GM18951 (cell line): ENCODE measurements at regions of chr4 and their contacts with region 1.

Region 1: GRCh38 chr4:70601422-70602039 is 9.5 kb downstream of the AMBN start:
- POLR2A ChIP-seq: no peak

Region 2: DNA sequence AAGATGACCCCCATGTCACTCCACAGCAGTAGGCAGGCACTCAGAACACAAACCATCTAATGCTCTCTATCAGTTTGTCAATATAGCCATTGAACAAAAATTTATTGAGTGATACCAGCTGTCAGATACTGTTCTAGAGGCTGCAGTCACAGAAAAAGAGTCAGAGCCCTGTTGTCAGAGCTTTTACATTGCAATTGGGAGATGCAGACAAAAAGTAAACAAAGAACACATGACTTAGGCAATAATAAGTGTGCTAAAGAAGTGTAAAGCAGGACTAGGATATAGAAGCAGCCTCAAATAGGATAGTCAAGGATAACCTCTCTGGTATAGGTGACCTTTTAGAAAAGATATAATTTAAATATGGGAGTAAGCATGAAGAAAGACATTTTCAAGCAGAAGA is 542.4 kb before region 1 on chr4:
- in situ Hi-C with region 1: no loop called
- POLR2A ChIP-seq: no peak

Region 3: DNA sequence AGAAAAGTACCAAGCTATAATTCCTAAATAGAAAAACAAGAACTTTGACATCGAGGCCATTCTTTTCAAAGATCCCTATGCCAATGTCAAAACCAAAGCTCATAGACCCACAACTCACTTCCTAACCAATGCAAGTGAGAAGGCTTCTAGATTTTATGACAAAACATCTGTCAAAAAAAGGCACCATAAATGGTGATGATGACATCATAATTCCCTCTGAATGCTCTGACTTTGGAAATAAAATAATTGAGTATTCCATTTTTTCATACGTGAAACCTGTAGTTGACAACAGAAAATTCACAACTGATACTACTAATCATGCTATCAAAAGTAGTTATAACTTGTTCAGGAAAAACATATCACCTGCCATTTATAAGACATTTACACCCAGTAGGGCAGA is 275.5 kb before region 1 on chr4:
- in situ Hi-C with region 1: no loop called
- POLR2A ChIP-seq: no peak

Region 4: DNA sequence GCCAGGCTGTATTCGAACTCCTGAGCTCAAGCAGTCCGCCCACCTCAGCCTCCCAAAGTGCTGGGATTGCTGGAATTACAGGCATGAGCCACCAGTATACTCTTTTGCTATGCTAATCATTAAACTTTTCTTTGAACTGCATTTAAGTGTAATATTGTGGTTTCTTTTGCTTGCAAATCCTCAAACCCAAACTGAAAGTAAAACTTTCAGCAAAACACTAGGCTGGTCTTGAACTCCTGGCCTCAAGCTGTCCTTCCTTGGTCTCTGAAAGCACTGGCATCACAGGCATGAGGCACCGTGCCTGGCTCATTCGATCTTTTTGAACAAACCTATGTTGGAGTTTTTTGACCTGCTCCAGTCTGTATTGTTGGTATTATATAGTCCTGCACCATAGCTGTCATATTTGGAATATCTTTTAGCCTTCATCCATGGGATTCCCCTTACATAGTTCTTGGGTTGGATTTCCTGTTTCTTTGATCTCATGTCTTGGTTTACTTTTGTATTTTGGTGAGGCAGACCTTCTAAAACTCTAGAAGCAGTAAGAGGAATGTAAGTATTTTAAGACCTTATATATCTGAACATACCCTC is 334.8 kb after region 1 on chr4:
- in situ Hi-C with region 1: no loop called
- POLR2A ChIP-seq: no peak

Region 5: DNA sequence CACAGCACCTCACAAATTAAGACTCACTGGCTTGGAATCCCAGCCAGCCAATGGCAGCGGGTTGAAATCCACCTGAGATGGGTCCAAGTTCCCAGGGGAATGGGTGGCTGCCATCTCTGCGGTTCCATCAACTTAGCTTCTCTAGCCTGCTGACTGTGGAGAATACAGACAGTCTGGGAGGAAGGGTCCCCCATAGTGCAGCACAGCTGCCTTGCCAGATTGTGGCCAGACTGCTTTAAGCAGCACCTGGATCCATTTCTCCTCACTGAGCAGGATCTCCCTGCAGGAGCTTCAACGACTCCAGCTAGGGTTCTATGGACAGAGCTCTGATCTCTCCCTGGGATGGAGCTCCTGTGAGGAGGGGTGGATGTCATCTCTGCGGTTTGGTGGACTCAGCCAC is 443.7 kb after region 1 on chr4:
- in situ Hi-C with region 1: no loop called
- POLR2A ChIP-seq: no peak

Region 6: GRCh38 chr4:71713611-71714203 is 1112.2 kb after region 1 on chr4:
- in situ Hi-C with region 1: loop called (anchors 25 kb)
- POLR2A ChIP-seq: no peak